Left ventricle myocardium superior (tissue), 1 donor: ENCODE measurements at regions of chr7 and their contacts with region 1.

Region 1: DNA sequence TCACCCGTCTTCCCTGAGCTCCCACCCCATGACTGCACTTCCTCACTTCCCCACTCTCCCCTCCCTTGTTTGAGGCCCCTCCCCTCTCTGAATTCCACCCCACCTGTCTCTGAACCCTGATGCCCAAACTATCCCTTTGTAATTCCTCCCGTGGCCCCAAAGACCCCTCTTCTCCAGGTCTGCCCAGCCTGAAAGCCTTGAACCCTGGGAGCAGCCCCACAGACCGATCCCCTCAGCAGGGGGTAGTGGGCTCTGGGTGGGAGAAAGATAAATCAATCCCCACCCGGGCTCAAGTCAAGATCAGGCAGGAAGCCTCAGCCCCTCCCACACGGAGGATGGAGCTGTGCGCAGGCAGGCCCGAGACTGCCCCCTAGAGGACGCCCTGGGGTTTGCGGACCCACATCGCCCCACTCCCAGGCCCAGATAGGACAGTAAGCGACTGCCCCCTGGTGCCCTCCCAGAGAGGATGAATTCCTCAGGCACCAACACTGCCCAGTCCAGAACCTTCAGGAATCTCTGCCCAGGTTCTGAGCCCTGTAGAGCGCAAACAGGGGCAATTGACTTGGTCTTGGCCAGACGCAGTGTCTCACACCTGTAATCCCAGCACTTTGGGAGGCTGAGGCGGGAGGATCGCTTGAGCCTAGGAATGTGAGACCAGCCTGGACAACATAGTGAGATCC is 11.7 kb downstream of the HSPB1 start:
- DNase-seq: peak; percentile 98
- ATAC-seq: peak; percentile 56

Region 2: DNA sequence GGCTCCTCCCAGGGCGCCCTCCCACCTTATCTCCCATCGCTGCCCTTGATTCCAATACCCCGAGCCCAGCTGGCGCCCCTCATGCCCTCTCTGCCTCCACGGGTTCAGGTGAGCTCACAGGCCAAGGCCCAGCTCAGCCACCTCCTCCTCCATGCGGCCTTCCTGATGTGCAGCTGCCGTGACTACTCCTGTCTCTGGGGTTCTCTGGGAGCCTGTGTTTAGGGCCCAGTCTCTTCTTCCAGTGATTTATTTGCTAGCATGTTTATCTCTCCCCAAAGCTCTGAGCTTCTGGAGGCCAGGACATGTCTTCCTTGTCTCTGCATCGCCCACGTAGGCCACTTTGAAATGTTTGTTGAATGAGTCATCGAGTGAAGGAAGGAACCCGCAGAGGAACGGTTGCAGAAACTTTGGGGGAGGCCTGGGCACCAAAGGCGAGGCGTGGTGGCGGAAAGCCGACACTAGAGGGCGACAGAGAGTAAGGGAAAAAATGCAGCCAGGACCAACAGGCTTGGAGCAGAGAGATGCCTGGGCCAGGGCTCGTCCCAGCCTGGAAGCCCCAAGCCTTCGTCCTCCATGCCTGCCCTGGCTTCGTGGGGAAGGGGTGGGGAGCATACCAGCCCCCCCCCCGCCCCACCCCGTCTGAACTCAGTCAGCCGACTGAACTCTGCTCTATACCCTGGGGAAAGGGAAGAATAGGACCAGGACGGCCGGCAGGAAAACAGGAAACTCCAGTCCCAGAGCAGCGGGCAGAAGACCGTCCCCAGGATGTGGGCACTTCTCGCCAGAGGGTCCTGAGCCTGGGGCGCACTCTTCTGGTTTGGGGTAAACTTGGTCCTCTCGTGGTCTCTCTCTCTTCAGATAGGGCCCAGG is 22.6 kb before region 1 on chr7:
- intact Hi-C with region 1: loop called (anchors 2 kb)
- DNase-seq: peak; percentile 92
- ATAC-seq: peak; percentile 72

Region 3: DNA sequence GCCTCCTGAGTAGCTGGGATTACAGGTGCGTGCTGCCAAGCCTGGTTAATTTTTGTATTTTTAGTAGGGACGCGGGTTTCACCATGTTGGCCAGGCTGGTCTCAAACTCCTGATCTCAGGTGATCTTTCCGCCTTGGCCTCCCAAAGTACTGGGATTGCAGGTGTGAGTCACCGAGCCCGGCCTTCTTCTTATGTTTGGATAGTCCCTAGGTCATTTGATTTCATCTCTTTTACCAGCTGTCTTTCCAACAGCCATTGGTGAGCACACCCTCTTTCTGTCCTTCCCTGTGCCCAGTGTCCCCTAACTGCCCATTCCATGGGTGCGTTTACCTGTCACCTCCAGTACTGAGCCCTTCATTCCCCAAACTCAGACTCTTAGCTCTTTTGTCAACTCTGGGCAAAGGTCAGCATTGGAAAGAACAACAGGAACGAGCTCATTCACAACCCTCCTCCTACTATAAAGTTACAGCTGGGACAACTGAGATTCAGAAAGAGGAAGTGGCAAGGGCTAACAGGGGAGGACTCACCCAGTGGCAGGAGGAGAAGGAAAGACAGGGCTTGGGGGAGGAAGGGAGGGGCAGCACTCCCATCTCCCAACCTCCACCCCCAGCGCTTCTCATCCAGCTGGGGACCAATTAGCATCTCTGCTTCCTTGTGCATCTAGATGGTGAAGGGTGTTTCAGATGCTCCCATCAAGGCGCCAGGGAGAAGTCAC is 89.8 kb after region 1 on chr7:
- intact Hi-C with region 1: no loop called
- DNase-seq: no peak
- ATAC-seq: peak; percentile 66